SK-N-SH (cell line): ENCODE measurements at regions of chr10 and their contacts with region 1.

Region 1: DNA sequence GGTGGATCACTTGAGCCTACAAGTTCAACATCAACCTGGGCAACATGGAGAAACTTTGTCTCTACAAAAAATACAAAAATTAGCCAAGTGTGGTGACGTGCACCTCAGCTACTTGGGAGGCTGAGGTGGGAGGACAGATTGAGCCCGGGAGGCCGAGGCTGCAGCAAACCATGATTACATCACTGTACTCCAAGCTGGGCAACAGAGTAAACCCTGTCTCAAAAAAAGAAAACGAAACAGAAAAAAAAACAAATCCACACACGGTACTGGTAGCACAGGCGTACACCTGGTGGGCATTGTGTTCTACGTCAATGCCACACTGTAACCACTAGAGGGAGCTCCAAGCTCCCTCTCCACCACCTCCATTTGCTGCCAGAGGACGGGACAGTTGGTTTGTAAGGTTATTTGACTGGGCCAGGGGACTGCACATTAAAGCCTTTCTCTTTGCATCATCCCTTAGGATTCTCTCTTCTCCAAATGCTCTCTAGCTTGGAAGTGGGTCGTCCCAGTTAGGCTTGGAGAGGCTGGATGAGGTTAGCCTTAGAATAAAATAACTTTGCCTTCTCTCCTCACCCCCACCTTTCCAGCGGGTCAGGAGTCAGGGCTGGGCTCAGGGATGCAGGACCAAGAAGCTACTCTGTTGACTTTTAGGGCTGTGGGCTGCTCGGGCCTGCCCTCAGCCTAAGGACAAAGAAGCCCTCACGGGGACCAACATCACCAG is 130.8 kb downstream of the SORBS1 start:
- DNase-seq: peak; percentile 81
- H3K4me3 ChIP-seq: no peak overlapping the region; a peak in 1 of 4 replicates
- H3K27ac ChIP-seq: no peak overlapping the region
- H3K4me1 ChIP-seq: peaks cover 0 to 12% of the 10 kb centered on the region in 2 experiments; a peak in 2 of 4 replicates
- H3K27me3 ChIP-seq: no peaks in the 10 kb centered on the region
- CTCF ChIP-seq: peak; percentile 97
- EP300 ChIP-seq: no peak
- RAD21 ChIP-seq: peak; percentile 95

Region 2: GRCh38 chr10:95414844-95415485 is 15.4 kb before region 1 on chr10:
- CTCF ChIA-PET with region 1: interaction called, 17 read pairs
- POLR2A ChIA-PET with region 1: no interaction called
- DNase-seq: no peak
- H3K4me3 ChIP-seq: no peak overlapping the region
- H3K27ac ChIP-seq: no peak overlapping the region
- H3K4me1 ChIP-seq: no peaks in the 10 kb centered on the region; a peak in 1 of 4 replicates
- H3K27me3 ChIP-seq: no peaks in the 10 kb centered on the region
- CTCF ChIP-seq: no peak
- EP300 ChIP-seq: no peak
- RAD21 ChIP-seq: no peak

Region 3: DNA sequence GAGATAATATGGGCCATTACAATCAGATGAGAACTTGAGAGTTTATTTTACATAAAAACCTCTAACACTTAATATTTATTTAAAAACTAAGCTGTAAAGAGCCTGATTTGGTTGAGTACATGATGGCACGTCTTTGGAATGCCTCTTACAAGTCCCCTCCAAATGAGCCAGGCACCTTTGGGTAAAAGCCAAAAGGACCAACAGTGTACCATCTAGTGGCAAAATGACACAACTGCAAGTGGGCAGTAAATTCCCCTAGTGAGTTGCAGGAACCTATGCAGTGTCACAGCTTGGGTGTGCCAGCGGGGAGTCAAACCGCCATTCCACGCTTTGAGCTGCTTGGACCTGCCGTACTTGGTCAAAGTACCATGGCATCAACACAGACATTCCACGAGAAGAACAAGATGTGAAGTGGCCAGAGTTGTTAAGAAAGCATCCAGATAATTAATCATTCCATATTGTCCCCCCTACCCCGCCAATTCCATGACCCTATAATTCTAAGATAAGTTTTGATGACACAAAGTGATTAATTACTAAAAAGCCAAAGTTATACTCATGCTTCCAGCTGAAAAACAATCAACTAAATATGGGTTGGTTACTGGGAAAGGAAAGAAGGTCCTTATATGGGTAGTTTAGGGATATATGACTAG is 15.6 kb after region 1 on chr10:
- CTCF ChIA-PET with region 1: interaction called, 136 read pairs
- POLR2A ChIA-PET with region 1: interaction called, 3 read pairs
- DNase-seq: peak; percentile 67
- H3K4me3 ChIP-seq: no peak overlapping the region
- H3K27ac ChIP-seq: 0 out of 4 replicates have a peak overlapping the region, but pooled peaks of 1 of the 2 experiments have one; percentile 16
- H3K4me1 ChIP-seq: peaks cover 4% of the 10 kb centered on the region in 2 experiments; a peak in 2 of 4 replicates
- H3K27me3 ChIP-seq: no peaks in the 10 kb centered on the region
- CTCF ChIP-seq: peak; percentile 81
- EP300 ChIP-seq: no peak
- RAD21 ChIP-seq: peak; percentile 64

Region 4: DNA sequence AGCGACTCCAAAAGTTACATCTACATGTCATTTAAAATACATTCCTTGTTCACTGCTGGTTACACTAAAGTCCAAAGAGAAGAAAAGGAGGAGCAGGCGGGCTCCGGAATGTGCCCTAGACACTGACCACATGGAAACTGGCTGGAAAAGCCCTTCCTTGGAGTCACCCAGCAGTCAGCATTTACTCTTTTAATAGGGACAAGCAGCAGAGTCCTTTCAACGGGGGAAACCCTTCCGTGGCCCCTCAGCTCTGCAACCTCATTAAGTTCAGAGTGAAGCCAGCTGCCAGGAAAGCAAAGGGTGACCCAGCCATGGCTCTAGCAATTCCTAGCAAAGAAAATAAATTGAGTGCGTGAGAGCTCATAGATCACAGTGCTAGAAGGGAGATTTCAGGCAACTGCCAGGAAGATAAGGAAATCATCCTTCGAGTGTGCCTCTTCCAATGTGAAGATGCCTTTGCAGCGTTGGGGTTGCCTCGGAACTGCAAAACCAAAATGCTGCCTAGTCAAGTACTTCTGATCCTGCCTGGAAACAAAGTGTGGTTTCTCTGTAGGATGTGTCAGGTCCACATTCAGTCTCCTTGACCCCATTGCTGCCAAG is 29.2 kb after region 1 on chr10:
- CTCF ChIA-PET with region 1: interaction called, 10 read pairs
- POLR2A ChIA-PET with region 1: no interaction called
- DNase-seq: no peak
- H3K4me3 ChIP-seq: no peak overlapping the region
- H3K27ac ChIP-seq: no peak overlapping the region
- H3K4me1 ChIP-seq: no peaks in the 10 kb centered on the region; a peak in 1 of 4 replicates
- H3K27me3 ChIP-seq: 0 out of 2 replicates have a peak, but pooled peaks cover 4% of the 10 kb centered on the region
- CTCF ChIP-seq: no peak
- EP300 ChIP-seq: no peak
- RAD21 ChIP-seq: no peak

Region 5: GRCh38 chr10:95579835-95580535 is 149.6 kb after region 1 on chr10:
- CTCF ChIA-PET with region 1: interaction called, 19 read pairs
- POLR2A ChIA-PET with region 1: no interaction called
- DNase-seq: no peak
- H3K4me3 ChIP-seq: no peak overlapping the region
- H3K27ac ChIP-seq: no peak overlapping the region
- H3K4me1 ChIP-seq: no peaks in the 10 kb centered on the region
- H3K27me3 ChIP-seq: no peaks in the 10 kb centered on the region; the same call in 1 of the 2 replicates
- CTCF ChIP-seq: no peak
- EP300 ChIP-seq: no peak
- RAD21 ChIP-seq: no peak

Region 6: GRCh38 chr10:95588025-95588424 is 157.6 kb after region 1 on chr10:
- CTCF ChIA-PET with region 1: interaction called, 20 read pairs
- POLR2A ChIA-PET with region 1: no interaction called
- DNase-seq: no peak
- H3K4me3 ChIP-seq: no peak overlapping the region
- H3K27ac ChIP-seq: no peak overlapping the region
- H3K4me1 ChIP-seq: no peaks in the 10 kb centered on the region
- H3K27me3 ChIP-seq: no peaks in the 10 kb centered on the region; the same call in 1 of the 2 replicates
- CTCF ChIP-seq: no peak
- EP300 ChIP-seq: no peak
- RAD21 ChIP-seq: no peak

Region 7: DNA sequence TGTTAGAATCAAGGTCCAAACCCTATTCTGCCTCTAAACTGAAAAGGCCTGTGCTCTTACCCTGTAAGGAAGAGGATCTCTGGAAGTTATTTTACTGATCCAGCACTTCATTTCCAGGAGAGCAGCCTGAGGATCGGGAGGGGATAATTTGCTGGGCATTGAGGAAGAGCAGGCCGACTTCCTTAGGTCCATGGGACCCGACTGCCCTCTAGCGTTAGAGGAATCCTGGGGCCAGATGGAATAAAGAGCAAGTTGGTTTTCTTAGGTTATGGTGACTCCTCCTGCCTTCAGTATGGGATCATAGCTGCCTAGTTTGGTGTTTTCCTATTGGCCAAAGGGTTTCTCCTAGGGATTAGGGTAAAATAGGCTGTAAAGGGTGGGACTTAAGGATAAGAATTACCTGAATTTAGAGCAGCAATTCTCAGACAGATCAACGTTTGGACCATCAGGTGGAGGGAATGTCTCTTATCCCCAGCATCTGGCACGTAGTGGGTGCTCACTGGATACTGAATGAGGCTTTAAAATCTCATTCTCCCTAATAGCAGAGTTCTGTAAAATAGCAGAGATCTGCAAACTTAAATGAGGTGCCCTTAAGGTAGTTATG is 170.8 kb after region 1 on chr10:
- CTCF ChIA-PET with region 1: interaction called, 162 read pairs
- POLR2A ChIA-PET with region 1: no interaction called
- DNase-seq: peak; percentile 80
- H3K4me3 ChIP-seq: peak overlapping the region in 1 of 2 experiments; percentile 13; a peak in 1 of 4 replicates
- H3K27ac ChIP-seq: no peak overlapping the region
- H3K4me1 ChIP-seq: no peaks in the 10 kb centered on the region
- H3K27me3 ChIP-seq: no peaks in the 10 kb centered on the region
- CTCF ChIP-seq: peak; percentile 96
- EP300 ChIP-seq: no peak
- RAD21 ChIP-seq: peak; percentile 98

Region 8: GRCh38 chr10:95767884-95768556 is 337.6 kb after region 1 on chr10:
- CTCF ChIA-PET with region 1: no interaction called
- POLR2A ChIA-PET with region 1: no interaction called
- DNase-seq: no peak
- H3K4me3 ChIP-seq: no peak overlapping the region
- H3K27ac ChIP-seq: no peak overlapping the region
- H3K4me1 ChIP-seq: no peaks in the 10 kb centered on the region
- H3K27me3 ChIP-seq: no peaks in the 10 kb centered on the region; the same call in 1 of the 2 replicates
- CTCF ChIP-seq: no peak
- EP300 ChIP-seq: no peak
- RAD21 ChIP-seq: no peak